Right ventricle myocardium inferior (tissue), 1 donor: ENCODE measurements at regions of chr3 and their contacts with region 1.

Region 1: DNA sequence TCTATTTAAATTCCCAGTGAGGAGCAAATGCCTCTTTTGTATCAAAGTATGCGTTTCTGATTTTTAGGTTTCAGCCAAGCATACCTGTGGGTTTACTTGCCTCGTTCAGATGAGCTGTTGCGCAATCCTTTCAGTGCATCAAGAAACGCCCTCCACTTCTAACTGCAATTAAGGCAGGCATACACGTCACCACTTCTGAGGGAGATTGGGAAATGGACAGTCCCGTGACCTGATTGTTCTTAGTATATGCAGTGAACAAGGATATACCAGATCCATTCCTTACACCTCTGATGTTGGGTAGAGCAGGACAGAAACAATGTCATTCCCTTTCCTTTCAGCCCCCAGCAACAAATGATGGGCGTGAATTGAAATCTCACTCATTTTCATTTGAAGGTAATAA is 219.0 kb downstream of the ITPR1 start:
- DNase-seq: no peak
- ATAC-seq: peak; percentile 14

Region 2: GRCh38 chr3:4693620-4694019 is 18.5 kb before region 1 on chr3:
- intact Hi-C with region 1: no loop called
- DNase-seq: no peak
- ATAC-seq: no peak

Region 3: GRCh38 chr3:5026331-5027218 is 314.4 kb after region 1 on chr3:
- intact Hi-C with region 1: loop called (anchors 1 kb)
- DNase-seq: peak; percentile 93
- ATAC-seq: peak; percentile 94

Region 4: DNA sequence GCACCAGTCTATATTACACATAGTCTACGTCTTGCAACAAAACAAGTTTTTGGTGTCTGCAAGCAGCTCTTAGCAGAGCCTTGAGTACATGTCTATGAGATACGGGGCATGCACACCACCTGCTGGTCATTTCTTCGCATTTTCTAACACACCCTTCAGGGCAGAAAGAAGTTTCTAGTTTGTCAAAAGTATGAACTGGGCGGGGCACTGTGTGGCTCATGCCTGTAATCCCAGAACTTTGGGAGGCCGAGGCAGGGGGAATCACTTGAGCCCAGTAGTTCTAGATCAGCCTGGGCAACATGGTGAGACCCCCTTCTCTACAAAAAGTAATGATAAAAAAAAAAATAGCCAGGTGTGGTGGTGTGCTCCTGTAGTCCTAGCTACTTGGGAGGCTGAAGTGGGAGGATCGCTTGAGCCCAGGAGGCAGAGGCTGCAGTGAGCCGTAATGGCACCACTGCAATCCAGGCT is 345.7 kb after region 1 on chr3:
- intact Hi-C with region 1: loop called (anchors 1 kb)
- DNase-seq: no peak
- ATAC-seq: peak; percentile 93

Region 5: GRCh38 chr3:5187156-5187919 is 475.2 kb after region 1 on chr3 and contains the start of gene EDEM1:
- intact Hi-C with region 1: loop called (anchors 5 kb)
- DNase-seq: peak; percentile 97
- ATAC-seq: peak; percentile 98
- total RNA-seq, gene EDEM1: 6.3 TPM